SK-N-SH (cell line): ENCODE measurements at regions of chr20 and their contacts with region 1.

Region 1: GRCh38 chr20:24007073-24007595 is 18.6 kb upstream of the GGTLC1 start:
- DNase-seq: no peak
- H3K4me3 ChIP-seq: no peak overlapping the region
- H3K27ac ChIP-seq: no peak overlapping the region
- H3K4me1 ChIP-seq: no peaks in the 10 kb centered on the region
- H3K27me3 ChIP-seq: peaks cover 11% of the 10 kb centered on the region; the same call in 1 of the 2 replicates
- CTCF ChIP-seq: no peak
- EP300 ChIP-seq: no peak
- RAD21 ChIP-seq: no peak

Region 2: GRCh38 chr20:23995905-23996666 is 11.0 kb before region 1 on chr20:
- CTCF ChIA-PET with region 1: interaction called, 14 read pairs
- POLR2A ChIA-PET with region 1: no interaction called
- DNase-seq: peak; percentile 50
- H3K4me3 ChIP-seq: no peak overlapping the region
- H3K27ac ChIP-seq: no peak overlapping the region
- H3K4me1 ChIP-seq: no peaks in the 10 kb centered on the region
- H3K27me3 ChIP-seq: no peaks in the 10 kb centered on the region
- CTCF ChIP-seq: peak; percentile 75
- EP300 ChIP-seq: no peak
- RAD21 ChIP-seq: peak; percentile 64

Region 3: DNA sequence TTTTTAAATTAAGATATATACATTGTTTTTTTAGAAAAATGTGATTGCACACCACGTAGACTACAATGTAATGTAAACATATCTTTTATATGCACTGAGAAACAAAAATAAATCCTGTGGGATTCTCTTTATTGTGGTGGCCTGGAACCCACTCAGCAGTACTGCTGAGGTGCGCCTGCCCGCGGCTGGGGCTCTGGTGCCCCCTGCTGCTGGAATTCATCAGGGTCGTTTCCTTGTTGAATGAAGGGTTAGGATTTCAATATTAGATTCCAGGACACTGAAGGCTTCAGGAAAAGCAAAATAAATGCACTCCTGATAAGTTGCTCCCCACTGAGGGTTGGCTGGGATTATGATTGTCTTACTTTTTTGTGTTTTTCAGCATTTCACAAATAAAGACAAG is 157.2 kb after region 1 on chr20:
- CTCF ChIA-PET with region 1: no interaction called
- POLR2A ChIA-PET with region 1: no interaction called
- DNase-seq: peak; percentile 46
- H3K4me3 ChIP-seq: no peak overlapping the region
- H3K27ac ChIP-seq: no peak overlapping the region
- H3K4me1 ChIP-seq: no peaks in the 10 kb centered on the region
- H3K27me3 ChIP-seq: no peaks in the 10 kb centered on the region
- CTCF ChIP-seq: peak; percentile 71
- EP300 ChIP-seq: no peak
- RAD21 ChIP-seq: peak; percentile 78